GM18951 (cell line): ENCODE measurements at regions of chr16 and their contacts with region 1.

Region 1: DNA sequence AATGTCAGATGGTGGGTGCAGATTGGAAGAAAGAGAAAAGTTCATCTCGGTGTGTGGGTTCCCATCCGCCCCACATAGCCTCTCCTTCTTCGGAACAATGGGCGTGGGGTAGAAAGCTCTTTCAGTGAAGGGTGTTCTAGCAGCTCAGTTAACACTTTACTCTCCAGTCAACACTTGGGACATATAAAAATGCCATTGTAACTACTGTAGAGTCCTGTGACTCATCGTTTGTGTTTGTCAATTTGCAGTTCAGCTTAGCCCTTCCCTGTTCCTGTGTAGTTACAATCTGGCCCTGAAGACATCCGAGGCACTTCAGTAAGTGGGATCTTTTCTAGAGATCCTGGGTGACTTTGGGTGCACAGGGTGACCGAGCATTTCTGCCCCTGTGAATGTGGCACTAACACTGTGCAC is 11.5 kb upstream of the CLEC18C start:
- POLR2A ChIP-seq: no peak

Region 2: DNA sequence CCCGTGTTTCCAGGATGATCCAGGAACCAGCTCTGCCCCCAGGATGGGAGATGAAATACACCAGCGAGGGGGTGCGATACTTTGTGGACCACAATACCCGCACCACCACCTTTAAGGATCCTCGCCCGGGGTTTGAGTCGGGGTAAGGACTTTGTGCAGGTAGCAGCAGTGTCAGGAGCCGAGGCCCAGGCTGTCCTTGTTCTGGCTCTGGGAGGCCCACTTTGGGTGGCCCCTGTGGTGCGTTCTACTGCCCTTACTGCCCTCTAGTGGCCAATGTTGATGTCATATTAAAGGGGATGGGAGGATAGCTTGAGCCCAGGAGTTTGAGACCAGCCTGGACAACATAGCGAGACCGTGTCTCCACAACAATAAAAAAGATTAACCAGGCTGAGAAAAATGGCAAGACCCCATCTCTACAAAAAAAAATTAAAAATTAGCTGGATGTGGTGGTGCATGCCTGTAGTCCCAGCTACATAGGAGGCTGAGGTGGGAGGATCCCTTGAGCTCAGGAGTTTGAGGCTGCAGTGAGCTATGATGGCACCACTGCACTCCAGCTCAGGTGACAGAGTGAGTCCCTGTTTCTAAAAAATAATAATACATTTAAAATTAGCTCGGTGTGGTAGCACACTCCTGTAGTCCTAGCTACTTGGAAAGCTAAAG is 231.8 kb before region 1 on chr16:
- in situ Hi-C with region 1: no loop called
- POLR2A ChIP-seq: no peak

Region 3: GRCh38 chr16:70638814-70639792 is 477.1 kb after region 1 on chr16:
- in situ Hi-C with region 1: loop called (anchors 25 kb)
- POLR2A ChIP-seq: no peak